ENCODE measurements at regions of chr6 and their contacts with region 1.

Region 1: DNA sequence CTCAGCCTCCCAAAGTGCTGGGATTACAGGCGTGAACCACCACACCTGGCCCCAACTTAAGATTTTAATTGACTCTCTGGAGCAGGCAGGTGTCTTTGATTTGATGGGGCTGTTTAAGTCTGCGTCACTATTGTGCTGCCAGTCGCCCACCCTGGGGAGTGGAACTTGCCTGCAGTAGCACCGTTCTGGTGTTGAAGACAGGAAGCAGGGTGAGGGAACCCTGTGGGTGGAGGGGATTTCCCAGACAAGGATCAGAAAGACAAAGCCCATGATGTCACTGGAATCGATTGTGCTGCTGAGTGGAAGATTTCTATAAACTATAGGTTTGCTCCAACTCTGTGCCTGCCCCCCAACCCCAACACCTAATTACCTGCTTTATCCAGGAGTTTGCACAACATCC is 11.0 kb downstream of the ALDH8A1 start:
- DNase-seq: no peak
- H3K4me3 ChIP-seq: no peak overlapping the region
- H3K27ac ChIP-seq: no peak overlapping the region
- H3K4me1 ChIP-seq: no peaks in the 10 kb centered on the region
- H3K27me3 ChIP-seq: no peaks in the 10 kb centered on the region
- CTCF ChIP-seq: no peak
- POLR2A ChIP-seq: no peak

Region 2: GRCh38 chr6:134111062-134111677 is 827.7 kb before region 1 on chr6:
- intact Hi-C with region 1: loop called in 1 of 2 experiments (anchors 5 kb)
- DNase-seq: peak in 5 of 7 donors; percentile 28 to 60 (median 42)
- H3K4me3 ChIP-seq: no peak overlapping the region
- H3K27ac ChIP-seq: no peak overlapping the region
- H3K4me1 ChIP-seq: no peaks in the 10 kb centered on the region
- H3K27me3 ChIP-seq: peaks cover 5% of the 10 kb centered on the region
- CTCF ChIP-seq: peak; percentile 58 to 80 (median 74)
- POLR2A ChIP-seq: no peak

Region 3: DNA sequence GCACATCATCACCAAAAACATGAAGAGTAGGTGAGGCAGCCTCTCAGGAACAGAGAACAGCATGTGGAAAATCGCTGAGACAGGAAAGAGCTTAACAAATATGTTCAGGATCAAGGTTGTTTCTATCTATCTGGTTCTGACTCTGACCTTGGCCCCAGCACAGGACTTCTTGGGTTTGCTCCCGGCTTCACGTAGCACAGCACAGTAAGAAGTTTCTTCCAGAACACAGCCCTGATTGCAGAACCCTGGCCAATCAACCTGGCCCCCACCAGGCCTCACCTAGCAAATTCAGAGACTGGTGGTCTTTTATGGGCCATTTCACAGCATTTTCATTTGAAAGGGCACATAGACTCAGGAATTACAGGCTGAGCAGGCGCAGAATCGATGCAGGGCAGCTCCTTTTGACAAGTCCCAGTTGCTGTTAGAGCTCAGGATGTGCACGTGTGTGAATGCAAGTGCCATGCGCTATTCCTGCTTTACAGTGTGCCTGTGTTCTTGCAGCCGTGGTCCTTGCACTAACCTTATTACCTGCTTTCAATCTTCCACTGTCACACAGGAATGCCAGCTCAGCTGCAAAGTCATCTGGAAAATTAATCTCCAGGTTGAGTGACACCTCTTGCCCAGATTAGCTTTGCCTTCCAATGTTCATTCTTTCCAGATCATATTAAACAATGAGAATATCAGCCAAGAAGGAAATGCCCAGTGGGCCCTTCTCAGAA is 786.0 kb before region 1 on chr6:
- intact Hi-C with region 1: loop called (anchors 10 kb)
- DNase-seq: peak in 4 of 7 donors; percentile 34 to 68 (median 48)
- H3K4me3 ChIP-seq: no peak overlapping the region
- H3K27ac ChIP-seq: no peak overlapping the region
- H3K4me1 ChIP-seq: peaks cover 0 to 9% of the 10 kb centered on the region in 2 donors
- H3K27me3 ChIP-seq: no peaks in the 10 kb centered on the region
- CTCF ChIP-seq: no peak
- POLR2A ChIP-seq: no peak

Region 4: GRCh38 chr6:134814086-134814709 is 124.7 kb before region 1 on chr6:
- intact Hi-C with region 1: no loop called
- DNase-seq: no peak
- H3K4me3 ChIP-seq: no peak overlapping the region
- H3K27ac ChIP-seq: no peak overlapping the region
- H3K4me1 ChIP-seq: no peaks in the 10 kb centered on the region
- H3K27me3 ChIP-seq: no peaks in the 10 kb centered on the region
- CTCF ChIP-seq: no peak
- POLR2A ChIP-seq: no peak

Region 5: DNA sequence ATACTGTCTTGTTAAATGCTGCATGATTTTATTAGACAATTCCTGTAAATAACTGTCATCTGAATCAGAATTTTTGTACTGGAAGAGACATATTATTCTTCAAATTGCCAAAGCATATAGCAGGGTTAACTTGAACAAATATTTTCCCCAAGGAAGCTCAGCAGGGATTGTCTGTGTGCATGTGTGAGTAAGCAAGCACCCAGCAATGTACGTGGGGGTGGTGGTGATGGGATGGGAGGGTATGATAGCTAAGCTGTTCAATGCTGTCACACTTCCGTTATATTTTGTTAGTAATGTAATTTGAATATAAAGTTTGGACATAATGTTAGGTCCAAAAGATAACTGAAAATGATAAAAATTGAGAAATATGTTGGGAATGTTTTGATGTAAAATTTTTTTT is 360.4 kb after region 1 on chr6:
- intact Hi-C with region 1: no loop called
- DNase-seq: no peak
- H3K4me3 ChIP-seq: no peak overlapping the region
- H3K27ac ChIP-seq: no peak overlapping the region
- H3K4me1 ChIP-seq: no peaks in the 10 kb centered on the region
- H3K27me3 ChIP-seq: no peaks in the 10 kb centered on the region
- CTCF ChIP-seq: no peak
- POLR2A ChIP-seq: no peak